Cardiac septum (tissue), 1 donor: ENCODE measurements at regions of chr19 and their contacts with region 1.

Region 1: GRCh38 chr19:17539238-17540117 is 16.0 kb upstream of the COLGALT1 start:
- DNase-seq: peak; percentile 96

Region 2: GRCh38 chr19:17575871-17576758 is 36.6 kb after region 1 on chr19:
- intact Hi-C with region 1: loop called (anchors 2 kb)
- DNase-seq: no peak

Region 3: DNA sequence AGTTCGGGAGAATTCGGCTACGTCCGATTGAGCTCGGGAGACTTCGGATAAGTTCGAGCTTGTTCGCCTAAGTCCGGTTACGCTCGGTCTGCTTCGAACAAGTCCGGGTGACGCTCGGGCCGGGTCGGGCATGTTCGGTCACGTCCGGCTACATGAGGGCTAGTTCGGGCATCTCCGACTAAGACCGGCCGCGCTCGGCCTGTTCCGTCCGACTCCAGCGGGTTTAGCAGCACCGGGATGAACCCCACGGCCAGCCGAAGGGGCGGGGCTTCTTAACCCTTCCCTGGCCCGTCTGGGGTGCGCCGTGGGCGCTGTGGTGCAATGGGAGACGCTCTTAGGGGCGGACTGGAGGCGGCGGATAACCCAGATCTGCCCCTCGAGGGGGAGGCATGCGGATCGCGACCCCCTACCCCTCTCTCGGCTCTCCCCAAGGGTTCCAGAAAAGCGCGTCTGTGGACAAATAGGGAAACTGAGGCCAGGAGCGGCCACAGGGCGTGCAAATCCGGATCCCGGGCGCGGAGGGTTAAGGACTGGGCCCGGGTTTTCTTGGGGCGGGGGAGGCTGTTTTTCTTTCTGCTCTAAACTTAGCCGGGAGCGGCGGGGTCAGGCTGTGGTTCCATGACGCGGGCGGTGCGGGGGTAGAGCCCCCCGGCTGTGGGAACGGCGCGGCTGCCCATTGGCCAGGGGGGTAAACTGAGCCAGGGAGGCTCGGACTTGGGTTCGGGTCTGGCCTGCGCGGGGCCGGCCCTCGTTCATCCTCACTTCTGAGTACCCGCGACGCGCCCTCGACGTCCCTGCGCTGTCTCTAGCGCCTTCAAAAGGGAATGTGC is 685.3 kb after region 1 on chr19:
- intact Hi-C with region 1: no loop called
- DNase-seq: peak; percentile 96